CD4-positive, alpha-beta memory T cell (primary cell): ENCODE measurements at regions of chr5 and their contacts with region 1.

Region 1: GRCh38 chr5:35736280-35736679 is 118.6 kb downstream of the SPEF2 start:
- DNase-seq: no peak
- H3K4me3 ChIP-seq: no peak overlapping the region
- H3K4me3 Mint-ChIP-seq: no peak overlapping the region
- H3K27ac ChIP-seq: no peak overlapping the region
- H3K27ac Mint-ChIP-seq: no peak overlapping the region
- H3K4me1 ChIP-seq: no peaks in the 10 kb centered on the region
- H3K4me1 Mint-ChIP-seq: peaks cover 8 to 17% (median 10%) of the 10 kb centered on the region in 4 donors
- H3K27me3 ChIP-seq: no peaks in the 10 kb centered on the region
- H3K27me3 Mint-ChIP-seq: no peaks in the 10 kb centered on the region

Region 2: DNA sequence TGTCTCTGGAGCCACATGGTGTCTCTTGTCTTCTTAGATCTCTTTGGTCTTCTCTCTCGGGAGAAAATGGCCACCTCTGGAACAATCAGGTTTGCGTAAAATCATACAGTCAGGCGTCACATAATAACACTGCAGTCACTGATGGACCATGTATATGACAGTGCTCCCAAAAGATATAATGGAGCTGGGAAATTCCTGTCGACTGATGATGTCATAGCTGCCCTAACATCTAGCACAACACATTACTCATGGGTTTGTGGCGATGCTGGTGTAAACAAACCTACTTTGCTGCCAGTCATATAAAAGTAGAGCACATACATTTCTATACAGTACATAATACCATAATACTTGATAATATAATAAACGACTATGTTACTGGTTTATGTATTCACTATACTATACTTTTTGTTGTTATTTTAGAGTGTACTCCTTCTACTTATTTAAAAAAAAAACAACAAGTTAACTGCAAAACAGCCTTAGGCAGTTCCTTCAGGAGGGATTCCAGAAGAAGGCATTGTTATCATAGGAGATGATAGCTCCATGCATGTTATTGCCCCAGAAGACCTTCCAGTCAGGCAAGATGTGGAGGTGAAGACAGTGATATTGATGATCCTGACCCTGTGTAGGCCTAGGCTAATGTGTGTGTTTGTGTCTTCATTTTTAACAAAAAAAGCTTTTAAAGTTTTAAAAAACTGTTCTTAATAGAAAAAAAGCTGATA is 1110.1 kb before region 1 on chr5:
- CTCF ChIA-PET with region 1: no interaction called
- POLR2A ChIA-PET with region 1: no interaction called
- intact Hi-C with region 1: no loop called
- DNase-seq: no peak
- H3K4me3 ChIP-seq: no peak overlapping the region
- H3K4me3 Mint-ChIP-seq: no peak overlapping the region
- H3K27ac ChIP-seq: no peak overlapping the region
- H3K27ac Mint-ChIP-seq: no peak overlapping the region
- H3K4me1 ChIP-seq: no peaks in the 10 kb centered on the region
- H3K4me1 Mint-ChIP-seq: no peaks in the 10 kb centered on the region
- H3K27me3 ChIP-seq: no peaks in the 10 kb centered on the region
- H3K27me3 Mint-ChIP-seq: peaks cover 0 to 8% of the 10 kb centered on the region in 2 donors

Region 3: DNA sequence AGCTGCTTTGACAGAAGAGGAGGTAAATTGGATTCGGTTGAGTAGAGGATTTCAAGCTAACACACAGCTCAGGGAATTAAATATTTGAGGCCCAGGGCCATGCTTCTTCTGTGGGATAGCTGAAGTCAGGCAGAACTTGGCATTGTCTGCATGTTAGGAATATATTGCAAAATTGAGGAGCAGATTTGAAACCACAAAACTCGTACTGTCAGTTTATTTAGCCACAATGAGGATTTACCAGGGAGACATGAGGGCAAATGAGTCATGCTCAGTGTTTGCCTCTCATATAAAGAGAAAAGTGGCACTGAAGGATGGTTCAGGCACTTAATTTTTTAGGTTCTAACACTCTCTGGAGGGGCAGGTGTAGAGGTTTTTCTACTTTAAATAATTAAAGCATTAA is 423.0 kb before region 1 on chr5:
- CTCF ChIA-PET with region 1: no interaction called
- POLR2A ChIA-PET with region 1: no interaction called
- intact Hi-C with region 1: loop called (anchors 5 kb)
- DNase-seq: no peak
- H3K4me3 ChIP-seq: no peak overlapping the region
- H3K4me3 Mint-ChIP-seq: no peak overlapping the region
- H3K27ac ChIP-seq: no peak overlapping the region
- H3K27ac Mint-ChIP-seq: no peak overlapping the region
- H3K4me1 ChIP-seq: no peaks in the 10 kb centered on the region
- H3K4me1 Mint-ChIP-seq: no peaks in the 10 kb centered on the region
- H3K27me3 ChIP-seq: no peaks in the 10 kb centered on the region
- H3K27me3 Mint-ChIP-seq: peaks cover 3 to 8% of the 10 kb centered on the region in 2 donors